Stomach (tissue), 19 donors: ENCODE measurements at regions of chr5 and their contacts with region 1.

Region 1: DNA sequence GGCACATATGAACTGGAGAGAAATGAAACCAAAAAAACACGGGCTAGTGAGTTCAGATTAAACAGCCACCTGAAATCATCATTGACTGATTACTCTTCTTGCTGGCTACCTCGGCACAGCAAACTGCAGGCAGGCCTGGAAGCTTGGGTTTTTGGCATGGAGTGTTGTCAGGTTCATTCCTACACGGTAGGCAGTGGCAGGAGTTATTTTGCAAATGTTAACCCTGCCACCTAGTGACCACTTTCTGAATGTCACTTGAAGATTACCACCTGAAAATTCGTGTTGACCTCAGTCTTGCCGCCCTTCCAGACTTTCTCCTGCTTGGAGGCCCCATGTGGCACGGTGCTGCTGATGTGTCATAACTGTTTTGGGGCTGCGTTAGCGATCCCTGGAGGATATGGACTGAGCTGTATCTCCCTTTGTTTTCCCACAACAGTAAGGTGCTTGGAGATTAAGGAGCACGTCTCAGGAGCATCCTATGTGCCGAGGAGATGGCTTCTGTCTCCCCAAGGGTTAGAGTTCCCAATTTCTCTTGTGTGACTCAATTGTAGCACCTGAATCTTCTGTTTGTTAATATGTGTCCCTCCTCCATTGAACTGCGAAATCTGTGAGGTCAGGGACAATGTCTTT is 12.7 kb upstream of the CD180 start:
- DNase-seq: peak; percentile 62 to 92
- H3K4me3 ChIP-seq: no peak overlapping the region
- H3K27ac ChIP-seq: no peak overlapping the region
- H3K4me1 ChIP-seq: peaks cover 7 to 45% (median 12%) of the 10 kb centered on the region in 4 donors
- H3K27me3 ChIP-seq: no peaks in the 10 kb centered on the region
- CTCF ChIP-seq: peak in 6 of 7 experiments; percentile 12 to 86 (median 75)
- EP300 ChIP-seq: no peak
- POLR2A ChIP-seq: no peak

Region 2: GRCh38 chr5:66807743-66808142 is 401.5 kb before region 1 on chr5:
- intact Hi-C with region 1: loop called (anchors 10 kb)
- DNase-seq: peak in 1 of 2 donors; percentile 60
- H3K4me3 ChIP-seq: no peak overlapping the region
- H3K27ac ChIP-seq: no peak overlapping the region
- H3K4me1 ChIP-seq: no peaks in the 10 kb centered on the region
- H3K27me3 ChIP-seq: peaks cover 0 to 5% (median 0%) of the 10 kb centered on the region in 3 donors
- CTCF ChIP-seq: peak in 2 of 7 experiments; percentile 7 to 21
- EP300 ChIP-seq: no peak
- POLR2A ChIP-seq: no peak

Region 3: GRCh38 chr5:67095346-67096171 is 113.7 kb before region 1 on chr5:
- intact Hi-C with region 1: no loop called
- DNase-seq: peak; percentile 63 to 78
- H3K4me3 ChIP-seq: no peak overlapping the region
- H3K27ac ChIP-seq: peak overlapping the region in 4 of 5 donors; percentile 5 to 73 (median 52)
- H3K4me1 ChIP-seq: peaks cover 9 to 53% (median 31%) of the 10 kb centered on the region in 4 donors
- H3K27me3 ChIP-seq: no peaks in the 10 kb centered on the region
- CTCF ChIP-seq: no peak
- EP300 ChIP-seq: no peak
- POLR2A ChIP-seq: no peak

Region 4: DNA sequence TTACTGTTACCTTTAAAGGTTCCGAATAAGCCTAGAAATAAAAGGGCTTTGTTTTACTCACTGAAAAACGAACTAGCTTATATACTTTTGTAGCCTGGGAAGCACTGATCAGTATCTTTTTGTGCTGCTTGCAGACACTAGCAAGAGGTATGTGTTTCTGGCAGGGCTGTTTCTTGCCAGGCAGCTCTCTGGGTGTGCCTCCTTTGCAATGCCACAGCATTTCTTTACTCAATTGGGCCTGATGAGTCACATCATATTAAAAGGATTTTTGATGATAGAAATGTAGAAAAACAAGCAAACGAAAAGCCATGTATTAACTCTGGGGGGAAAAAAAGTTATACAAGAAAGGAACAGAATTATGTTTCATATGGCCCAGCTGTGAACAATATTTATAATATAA is 48.3 kb before region 1 on chr5:
- intact Hi-C with region 1: loop called (anchors 5 kb)
- DNase-seq: peak in 1 of 2 donors; percentile 67
- H3K4me3 ChIP-seq: no peak overlapping the region
- H3K27ac ChIP-seq: peak overlapping the region in 3 of 5 donors; percentile 6 to 36 (median 16)
- H3K4me1 ChIP-seq: peaks cover 0 to 25% (median 10%) of the 10 kb centered on the region in 4 donors
- H3K27me3 ChIP-seq: no peaks in the 10 kb centered on the region
- CTCF ChIP-seq: no peak
- EP300 ChIP-seq: no peak
- POLR2A ChIP-seq: no peak

Region 5: GRCh38 chr5:67493676-67494075 is 284.4 kb after region 1 on chr5:
- intact Hi-C with region 1: no loop called
- DNase-seq: peak; percentile 37 to 63
- H3K4me3 ChIP-seq: no peak overlapping the region
- H3K27ac ChIP-seq: peak overlapping the region in 1 of 5 donors; percentile 48
- H3K4me1 ChIP-seq: peaks cover 0 to 25% (median 6%) of the 10 kb centered on the region in 4 donors
- H3K27me3 ChIP-seq: no peaks in the 10 kb centered on the region
- CTCF ChIP-seq: peak in 3 of 7 experiments; percentile 31 to 51 (median 36)
- EP300 ChIP-seq: no peak
- POLR2A ChIP-seq: no peak

Region 6: DNA sequence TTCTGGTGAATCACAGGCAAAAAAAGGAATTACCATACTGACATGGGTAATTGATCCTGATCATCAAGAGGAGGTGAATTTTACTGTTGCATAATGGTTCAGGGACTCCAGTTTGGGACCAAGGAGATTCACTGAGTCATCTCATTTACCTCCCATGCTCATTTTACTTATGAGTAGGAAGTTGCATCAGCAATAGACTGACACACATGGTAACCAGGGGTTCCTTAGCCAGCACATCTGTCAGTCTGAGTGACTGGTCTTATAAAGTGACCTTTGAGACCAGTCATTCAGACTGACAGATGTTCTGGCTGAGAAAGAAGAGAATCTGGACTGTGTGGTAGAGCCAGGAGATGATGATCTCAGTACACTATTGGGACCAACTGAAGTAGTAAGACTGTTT is 371.9 kb after region 1 on chr5:
- intact Hi-C with region 1: no loop called
- DNase-seq: no peak
- H3K4me3 ChIP-seq: no peak overlapping the region
- H3K27ac ChIP-seq: no peak overlapping the region
- H3K4me1 ChIP-seq: peaks cover 0 to 11% (median 3%) of the 10 kb centered on the region in 4 donors
- H3K27me3 ChIP-seq: no peaks in the 10 kb centered on the region
- CTCF ChIP-seq: no peak
- EP300 ChIP-seq: no peak
- POLR2A ChIP-seq: no peak